GM10248 (cell line): ENCODE measurements at regions of chr4 and their contacts with region 1.

Region 1: GRCh38 chr4:81427344-81427821 is 44.3 kb downstream of the RASGEF1B start:
- DNase-seq: no peak
- CTCF ChIP-seq: no peak

Region 2: GRCh38 chr4:81412946-81413495 is 14.4 kb before region 1 on chr4:
- CTCF ChIA-PET with region 1: no interaction called
- POLR2A ChIA-PET with region 1: no interaction called
- DNase-seq: no peak
- CTCF ChIP-seq: no peak

Region 3: GRCh38 chr4:81454499-81454898 is 27.1 kb after region 1 on chr4:
- CTCF ChIA-PET with region 1: interaction called, 10 read pairs
- POLR2A ChIA-PET with region 1: no interaction called
- DNase-seq: no peak
- CTCF ChIP-seq: no peak